ENCODE measurements at regions of chr3 and their contacts with region 1.

Region 1: DNA sequence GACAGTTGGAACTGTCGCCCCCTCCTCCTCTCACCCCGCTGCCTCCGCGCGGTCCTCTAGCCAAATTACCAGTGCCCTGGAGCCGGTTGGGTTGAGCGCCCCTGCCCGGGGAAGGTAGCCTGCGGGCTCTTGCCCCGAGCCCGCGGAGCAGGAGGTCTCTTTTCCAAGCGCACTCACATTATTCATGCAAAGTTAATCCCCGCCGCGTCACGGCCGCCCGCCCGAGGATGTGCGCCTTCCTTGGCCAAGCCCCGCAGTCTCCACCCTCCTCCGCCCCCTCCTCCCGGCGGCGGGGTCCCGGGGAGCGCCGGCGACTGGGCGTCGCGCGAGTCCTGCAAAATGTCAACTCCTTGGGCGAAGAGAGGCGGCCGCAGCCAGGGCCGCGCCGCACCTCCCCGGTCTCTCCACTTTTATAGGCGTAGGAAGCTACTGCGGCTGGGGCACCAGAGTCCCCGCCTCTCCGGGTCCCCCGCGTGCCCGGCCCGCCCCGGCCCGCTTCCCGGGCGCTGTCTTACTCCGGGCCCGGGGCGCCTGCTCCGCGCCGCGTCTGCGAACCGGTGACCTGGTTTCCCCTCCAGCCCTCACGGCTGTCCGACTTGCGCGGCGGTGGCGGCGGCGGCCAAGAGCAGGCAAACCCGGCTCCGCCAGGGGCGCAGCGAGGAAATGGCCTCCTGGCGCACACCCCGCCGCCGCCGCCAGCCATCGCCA is at the start of gene THRB:
- DNase-seq: peak; percentile 56
- ATAC-seq: peak; percentile 82
- H3K4me3 ChIP-seq: peak within 1 kb of the TSS; percentile 83 to 96 (median 92)
- H3K27ac ChIP-seq: peak within 1 kb of the TSS; percentile 93
- H3K4me1 ChIP-seq: peaks cover 41% of the 10 kb centered on the region
- H3K27me3 ChIP-seq: no peaks in the 10 kb centered on the region; a peak in 1 of 5 replicates
- CTCF ChIP-seq: no peak
- EP300 ChIP-seq: no peak
- POLR2A ChIP-seq: peak in 1 of 2 experiments; percentile 37; a peak in 1 of 4 replicates
- RAD21 ChIP-seq: peak; percentile 60
- total RNA-seq, gene THRB: 22.7 and 30.1 TPM in 2 replicates

Region 2: DNA sequence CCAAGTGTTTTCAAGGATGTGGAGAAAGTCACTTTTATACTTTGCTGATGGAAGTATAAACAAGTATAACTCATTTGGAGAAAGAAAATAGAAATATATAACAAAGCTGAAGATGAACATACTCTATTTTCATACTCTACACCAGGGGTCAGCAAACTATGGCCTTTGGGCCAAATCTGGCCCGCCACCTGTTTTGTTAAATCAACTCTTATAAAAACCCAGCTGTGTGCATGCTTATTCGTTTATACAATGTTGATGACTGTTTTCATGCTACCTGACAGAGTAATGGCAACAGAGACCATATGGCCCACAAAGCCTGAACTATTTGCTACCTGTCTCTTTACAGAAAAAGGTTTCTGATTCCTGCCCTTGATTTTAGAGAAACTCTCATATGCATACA is 425.7 kb before region 1 on chr3:
- CTCF ChIA-PET with region 1: no interaction called
- POLR2A ChIA-PET with region 1: no interaction called
- in situ Hi-C with region 1: no loop called
- intact Hi-C with region 1: loop called (anchors 5 kb)
- DNase-seq: peak; percentile 5
- ATAC-seq: no peak; the same call in 2 of the 3 replicates
- H3K4me3 ChIP-seq: no peak overlapping the region
- H3K27ac ChIP-seq: no peak overlapping the region
- H3K4me1 ChIP-seq: no peaks in the 10 kb centered on the region
- H3K27me3 ChIP-seq: no peaks in the 10 kb centered on the region; a peak in 2 of 5 replicates
- CTCF ChIP-seq: peak; percentile 58
- EP300 ChIP-seq: no peak
- POLR2A ChIP-seq: no peak
- RAD21 ChIP-seq: 0 out of 2 replicates have a peak, but pooled peaks have one; percentile 32

Region 3: GRCh38 chr3:24359645-24360462 is 134.9 kb before region 1 on chr3:
- CTCF ChIA-PET with region 1: no interaction called
- POLR2A ChIA-PET with region 1: interaction called, 25 read pairs
- in situ Hi-C with region 1: loop called (anchors 10 kb)
- intact Hi-C with region 1: loop called (anchors 2 kb)
- DNase-seq: no peak
- ATAC-seq: peak; percentile 76
- H3K4me3 ChIP-seq: no peak overlapping the region
- H3K27ac ChIP-seq: no peak overlapping the region
- H3K4me1 ChIP-seq: peaks cover 49% of the 10 kb centered on the region
- H3K27me3 ChIP-seq: no peaks in the 10 kb centered on the region
- CTCF ChIP-seq: peak; percentile 49; the same call in 1 of the 2 replicates
- EP300 ChIP-seq: no peak
- POLR2A ChIP-seq: no peak
- RAD21 ChIP-seq: peak; percentile 52; the same call in 1 of the 2 replicates

Region 4: DNA sequence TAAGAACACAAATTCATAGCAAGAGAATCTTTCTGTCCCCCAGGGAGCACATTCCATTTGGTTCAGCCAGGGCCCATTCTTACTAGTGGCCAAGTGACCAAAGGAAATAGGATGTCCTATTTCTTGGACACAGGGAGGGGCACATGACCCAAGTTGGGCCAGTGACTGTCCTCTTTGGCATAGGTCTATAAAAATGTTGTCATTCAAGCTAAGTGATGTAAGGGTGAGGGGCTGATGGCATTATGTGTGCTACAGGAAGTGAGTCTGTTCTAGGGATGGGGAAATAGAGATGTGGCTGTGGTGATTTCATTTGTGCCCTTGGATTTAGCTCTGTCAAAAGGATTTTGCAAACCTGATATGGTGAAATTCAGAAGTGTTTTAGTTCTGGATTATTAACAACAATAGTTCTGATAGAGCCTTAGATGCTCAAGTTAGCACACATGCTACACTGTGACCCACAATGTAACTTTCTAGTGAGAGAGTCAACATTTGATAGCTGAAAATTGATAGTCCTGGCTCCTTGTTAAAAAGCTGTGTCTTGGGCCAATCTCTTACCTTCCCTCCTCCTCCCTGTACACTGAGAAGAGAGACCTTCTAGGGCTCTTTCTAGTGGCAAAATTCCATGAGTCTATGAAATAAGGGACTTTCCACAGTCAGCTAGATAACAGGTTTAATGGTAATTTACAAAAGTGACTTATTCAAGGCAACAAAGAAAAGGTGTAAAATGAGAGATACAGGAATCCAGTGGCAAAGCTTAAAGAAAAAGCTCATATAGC is 117.4 kb before region 1 on chr3:
- CTCF ChIA-PET with region 1: no interaction called
- POLR2A ChIA-PET with region 1: interaction called, 15 read pairs
- in situ Hi-C with region 1: no loop called
- intact Hi-C with region 1: no loop called
- DNase-seq: no peak
- ATAC-seq: no peak
- H3K4me3 ChIP-seq: no peak overlapping the region
- H3K27ac ChIP-seq: no peak overlapping the region
- H3K4me1 ChIP-seq: peaks cover 55% of the 10 kb centered on the region
- H3K27me3 ChIP-seq: no peaks in the 10 kb centered on the region
- CTCF ChIP-seq: no peak
- EP300 ChIP-seq: no peak
- POLR2A ChIP-seq: no peak
- RAD21 ChIP-seq: no peak

Region 5: DNA sequence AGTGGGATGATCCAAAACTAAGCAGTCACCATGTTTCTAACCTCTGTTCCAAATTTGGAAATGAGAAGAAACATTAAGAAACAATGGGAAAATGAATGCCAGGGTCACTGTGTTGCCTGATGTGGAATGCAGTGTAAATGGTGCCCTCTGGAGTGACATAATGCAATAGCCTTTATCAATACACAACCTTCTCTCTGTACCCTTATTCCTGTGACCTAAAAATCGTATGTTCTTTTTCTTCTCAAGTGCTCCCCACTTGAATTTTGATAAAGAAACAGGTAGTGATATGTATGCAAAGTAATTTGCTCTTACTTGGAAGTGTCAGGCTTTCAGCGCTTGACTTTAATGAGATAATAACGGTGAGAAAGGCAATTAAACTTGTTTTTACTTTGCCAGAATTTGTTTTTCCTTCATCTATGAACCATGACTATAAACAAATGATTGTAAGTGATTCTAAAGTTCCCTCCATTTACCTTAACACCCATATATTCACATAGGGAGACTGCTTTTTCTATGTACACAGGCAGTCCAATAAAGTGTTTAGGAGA is 145.6 kb after region 1 on chr3:
- CTCF ChIA-PET with region 1: no interaction called
- POLR2A ChIA-PET with region 1: no interaction called
- in situ Hi-C with region 1: no loop called
- intact Hi-C with region 1: loop called (anchors 1 kb)
- DNase-seq: peak; percentile 15
- ATAC-seq: peak; percentile 94
- H3K4me3 ChIP-seq: no peak overlapping the region
- H3K27ac ChIP-seq: no peak overlapping the region
- H3K4me1 ChIP-seq: no peaks in the 10 kb centered on the region
- H3K27me3 ChIP-seq: no peaks in the 10 kb centered on the region
- CTCF ChIP-seq: peak; percentile 79
- EP300 ChIP-seq: no peak
- POLR2A ChIP-seq: no peak
- RAD21 ChIP-seq: peak; percentile 68; the same call in 1 of the 2 replicates

Region 6: DNA sequence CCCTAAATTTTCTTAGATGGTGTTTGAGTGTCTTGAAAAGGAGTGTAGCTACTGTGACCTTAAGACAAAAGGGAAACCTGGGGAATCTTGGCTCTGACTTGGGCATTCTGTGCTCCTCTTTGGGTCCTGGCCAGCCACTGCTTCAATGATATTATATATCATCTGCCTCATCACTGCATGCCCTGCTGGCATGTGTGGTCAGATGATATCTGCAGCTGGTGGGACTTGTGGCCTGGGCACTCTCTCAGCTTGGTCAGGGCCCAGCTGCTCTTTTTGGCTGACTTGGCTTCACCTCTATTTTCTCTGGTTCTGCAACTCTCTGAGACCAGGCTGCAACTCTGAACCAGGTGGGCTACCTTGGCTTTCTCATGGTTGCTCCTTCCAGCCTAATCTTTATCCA is 487.2 kb after region 1 on chr3:
- CTCF ChIA-PET with region 1: no interaction called
- POLR2A ChIA-PET with region 1: no interaction called
- in situ Hi-C with region 1: no loop called
- intact Hi-C with region 1: no loop called
- DNase-seq: no peak
- ATAC-seq: no peak
- H3K4me3 ChIP-seq: no peak overlapping the region
- H3K27ac ChIP-seq: no peak overlapping the region
- H3K4me1 ChIP-seq: no peaks in the 10 kb centered on the region
- H3K27me3 ChIP-seq: no peaks in the 10 kb centered on the region
- CTCF ChIP-seq: no peak
- EP300 ChIP-seq: no peak
- POLR2A ChIP-seq: no peak
- RAD21 ChIP-seq: no peak

Measured in HepG2 (cell line).